Sigmoid colon (tissue), 7 donors: ENCODE measurements at regions of chr14 and their contacts with region 1.

Region 1: DNA sequence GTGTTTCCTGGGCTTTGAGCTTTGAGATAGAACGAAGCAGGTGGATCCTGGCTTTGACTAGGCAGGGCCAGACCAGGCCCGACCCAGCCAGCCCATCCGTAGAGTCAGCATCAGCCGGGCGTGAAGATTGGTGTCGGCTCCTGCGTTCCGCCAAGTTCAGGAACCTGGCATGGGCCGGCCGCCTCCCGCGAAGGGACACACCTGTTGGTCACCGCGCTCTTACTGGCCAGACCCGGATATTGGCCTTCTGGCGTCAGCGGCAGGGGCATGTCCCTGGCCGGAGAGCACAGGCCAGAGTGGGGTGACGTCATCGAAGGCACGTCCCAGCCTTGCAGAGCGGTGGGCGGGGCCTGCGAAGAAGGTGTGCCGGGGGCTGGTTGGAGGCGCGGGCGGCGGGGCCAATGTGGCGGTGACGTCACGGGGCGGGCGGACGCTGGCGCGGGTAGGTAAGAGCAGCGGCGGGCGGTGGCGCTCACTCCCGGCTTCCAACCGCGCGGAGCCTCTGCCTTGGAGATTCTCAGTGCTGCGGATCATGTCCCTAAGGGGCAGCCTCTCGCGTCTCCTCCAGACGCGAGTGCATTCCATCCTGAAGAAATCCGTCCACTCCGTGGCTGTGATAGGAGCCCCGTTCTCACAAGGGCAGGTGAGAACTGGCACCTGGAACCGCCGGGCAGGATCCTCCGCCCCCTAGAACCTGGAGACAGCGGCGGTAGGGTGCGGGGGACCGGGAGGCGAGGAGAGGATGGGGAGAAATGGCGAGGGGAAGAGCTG is at the start of gene ARG2:
- DNase-seq: peak; percentile 98
- H3K4me3 ChIP-seq: peak within 1 kb of the TSS; percentile 46 to 64 (median 60)
- H3K27ac ChIP-seq: peak within 1 kb of the TSS; percentile 75 to 80 (median 78)
- H3K4me1 ChIP-seq: peaks cover 0 to 45% (median 40%) of the 10 kb centered on the region in 4 donors
- H3K27me3 ChIP-seq: no peaks in the 10 kb centered on the region
- CTCF ChIP-seq: no peak
- EP300 ChIP-seq: peak in 1 of 4 donors; percentile 43
- POLR2A ChIP-seq: peak; percentile 42 to 60
- total RNA-seq, gene ARG2: 1.6 to 11.4 (median 5.5) TPM

Region 2: GRCh38 chr14:67666750-67667449 is 47.3 kb after region 1 on chr14:
- intact Hi-C with region 1: loop called (anchors 2 kb)
- DNase-seq: no peak
- H3K4me3 ChIP-seq: no peak overlapping the region
- H3K27ac ChIP-seq: peak overlapping the region in 1 of 4 donors; percentile 26
- H3K4me1 ChIP-seq: peaks cover 0 to 31% (median 13%) of the 10 kb centered on the region in 4 donors
- H3K27me3 ChIP-seq: no peaks in the 10 kb centered on the region
- CTCF ChIP-seq: peak; percentile 33 to 62 (median 59)
- EP300 ChIP-seq: no peak
- POLR2A ChIP-seq: no peak